Caco-2 (cell line): ENCODE measurements at regions of chr16 and their contacts with region 1.

Region 1: DNA sequence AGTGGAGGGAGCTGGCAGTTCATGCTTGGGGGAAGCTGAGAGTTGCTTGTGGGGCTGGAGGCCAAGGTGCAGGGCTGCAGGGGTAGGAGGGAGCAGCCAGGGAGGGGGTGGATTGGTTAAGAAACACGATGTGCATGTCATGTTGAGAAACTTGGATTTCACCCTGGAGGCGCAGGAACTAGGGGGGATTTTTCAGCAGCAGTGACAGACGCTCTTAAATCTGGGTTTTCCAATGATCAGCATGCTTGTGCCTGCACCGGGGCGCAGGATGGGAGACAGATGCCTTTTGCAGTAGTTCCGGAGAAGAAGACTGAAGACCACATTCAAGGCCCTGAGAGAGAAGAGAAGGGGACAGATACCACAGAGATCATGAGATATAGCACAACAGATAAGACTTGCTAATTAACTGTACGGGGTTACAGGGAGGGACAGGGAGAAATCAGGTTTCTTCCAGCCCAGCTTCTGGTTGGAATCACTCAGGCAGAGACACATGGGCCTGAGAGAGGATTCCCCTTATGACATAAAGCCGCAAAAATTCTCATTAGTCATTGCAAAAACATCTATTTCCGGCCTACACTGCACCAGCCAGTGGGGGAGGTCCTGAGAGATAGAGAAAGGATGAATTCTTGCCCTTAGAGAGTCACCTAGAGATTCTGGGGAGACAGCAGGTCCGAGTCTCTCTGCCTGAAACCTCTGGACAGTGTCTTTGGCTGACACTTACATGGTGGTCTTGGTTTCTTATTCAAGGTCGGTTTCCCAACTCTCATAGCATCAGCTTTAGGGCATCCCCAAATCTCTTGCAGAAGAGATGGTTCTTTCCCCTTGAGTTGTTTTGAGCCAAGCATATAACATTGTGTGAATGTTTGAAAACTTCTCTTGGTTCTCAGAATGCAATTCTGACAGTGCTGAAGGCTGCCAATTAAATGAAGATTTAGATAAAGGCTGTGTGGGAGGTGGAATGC is 27.1 kb downstream of the CDH13 start:
- DNase-seq: peak; percentile 61 to 69
- H3K4me3 ChIP-seq: no peak overlapping the region
- H3K4me3 Mint-ChIP-seq: peak overlapping the region; percentile 8
- H3K27ac Mint-ChIP-seq: peak overlapping the region; percentile 66
- H3K4me1 ChIP-seq: peaks cover 49% of the 10 kb centered on the region
- H3K4me1 Mint-ChIP-seq: peaks cover 24% of the 10 kb centered on the region
- H3K27me3 ChIP-seq: no peaks in the 10 kb centered on the region
- H3K27me3 Mint-ChIP-seq: no peaks in the 10 kb centered on the region
- CTCF ChIP-seq: no peak

Region 2: GRCh38 chr16:82630688-82631087 is 23.1 kb before region 1 on chr16:
- CTCF ChIA-PET with region 1: no interaction called
- POLR2A ChIA-PET with region 1: no interaction called
- intact Hi-C with region 1: no loop called
- DNase-seq: no peak
- H3K4me3 ChIP-seq: no peak overlapping the region
- H3K4me3 Mint-ChIP-seq: no peak overlapping the region
- H3K27ac Mint-ChIP-seq: no peak overlapping the region
- H3K4me1 ChIP-seq: peaks cover 28% of the 10 kb centered on the region
- H3K4me1 Mint-ChIP-seq: peaks cover 30% of the 10 kb centered on the region
- H3K27me3 ChIP-seq: no peaks in the 10 kb centered on the region
- H3K27me3 Mint-ChIP-seq: peaks cover 8% of the 10 kb centered on the region
- CTCF ChIP-seq: peak; percentile 32 to 50

Region 3: GRCh38 chr16:82703871-82704768 is 50.3 kb after region 1 on chr16:
- CTCF ChIA-PET with region 1: no interaction called
- POLR2A ChIA-PET with region 1: no interaction called
- intact Hi-C with region 1: no loop called
- DNase-seq: no peak
- H3K4me3 ChIP-seq: no peak overlapping the region
- H3K4me3 Mint-ChIP-seq: no peak overlapping the region
- H3K27ac Mint-ChIP-seq: no peak overlapping the region
- H3K4me1 ChIP-seq: no peaks in the 10 kb centered on the region
- H3K4me1 Mint-ChIP-seq: no peaks in the 10 kb centered on the region
- H3K27me3 ChIP-seq: no peaks in the 10 kb centered on the region
- H3K27me3 Mint-ChIP-seq: peaks cover 17% of the 10 kb centered on the region
- CTCF ChIP-seq: no peak

Region 4: GRCh38 chr16:83143788-83144187 is 490.0 kb after region 1 on chr16:
- CTCF ChIA-PET with region 1: no interaction called
- POLR2A ChIA-PET with region 1: no interaction called
- intact Hi-C with region 1: loop called (anchors 5 kb)
- DNase-seq: peak; percentile 92 to 97
- H3K4me3 ChIP-seq: no peak overlapping the region
- H3K4me3 Mint-ChIP-seq: peak overlapping the region; percentile 54
- H3K27ac Mint-ChIP-seq: peak overlapping the region; percentile 81
- H3K4me1 ChIP-seq: peaks cover 33% of the 10 kb centered on the region
- H3K4me1 Mint-ChIP-seq: peaks cover 17% of the 10 kb centered on the region
- H3K27me3 ChIP-seq: no peaks in the 10 kb centered on the region
- H3K27me3 Mint-ChIP-seq: no peaks in the 10 kb centered on the region
- CTCF ChIP-seq: no peak